CD8-positive, alpha-beta T cell (primary cell): ENCODE measurements at regions of chr19 and their contacts with region 1.

Region 1: DNA sequence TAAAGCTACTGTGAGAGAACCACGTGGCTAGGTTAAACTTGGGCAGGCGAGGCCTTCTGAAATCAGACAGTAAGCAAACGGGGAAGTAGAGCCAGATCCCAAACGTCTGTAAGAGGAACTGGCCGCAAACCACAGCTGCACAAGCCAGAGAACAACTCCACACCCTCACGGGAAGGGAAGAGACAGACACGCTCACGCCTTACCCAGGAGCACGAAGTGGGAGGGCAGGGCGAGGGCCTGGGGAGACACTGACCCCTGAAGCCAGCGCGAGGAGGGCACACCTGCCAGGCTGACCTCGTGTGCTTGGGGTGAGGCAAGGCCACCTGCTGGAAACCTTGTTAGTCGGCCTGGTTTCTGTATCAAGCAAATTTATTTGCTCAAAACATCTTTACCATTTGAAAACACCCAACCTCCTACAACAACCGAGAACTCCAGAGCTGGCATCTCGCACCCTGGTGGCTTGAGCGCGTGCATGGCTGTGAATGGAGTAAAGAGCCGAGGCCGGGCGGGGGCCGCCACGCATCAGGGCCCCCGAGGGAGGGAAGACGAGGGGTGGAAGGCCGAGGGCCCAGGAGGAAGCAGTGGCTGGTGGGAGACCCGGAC is 7.3 kb downstream of the POLR2E start:
- DNase-seq: peak in 5 of 9 experiments; percentile 61 to 82 (median 68)
- ATAC-seq: peak; percentile 21
- H3K4me3 ChIP-seq: no peak overlapping the region
- H3K4me3 Mint-ChIP-seq: peak overlapping the region; percentile 64
- H3K27ac ChIP-seq: peak overlapping the region; percentile 29 to 74
- H3K27ac Mint-ChIP-seq: peak overlapping the region; percentile 95
- H3K4me1 ChIP-seq: peaks cover 90% of the 10 kb centered on the region
- H3K4me1 Mint-ChIP-seq: peaks cover 44% of the 10 kb centered on the region
- H3K27me3 ChIP-seq: no peaks in the 10 kb centered on the region
- H3K27me3 Mint-ChIP-seq: no peaks in the 10 kb centered on the region
- CTCF ChIP-seq: no peak

Region 2: GRCh38 chr19:920051-920864 is 167.7 kb before region 1 on chr19:
- CTCF ChIA-PET with region 1: no interaction called
- POLR2A ChIA-PET with region 1: no interaction called
- intact Hi-C with region 1: loop called (anchors 2 to 10 kb)
- DNase-seq: peak in 8 of 9 experiments; percentile 58 to 84 (median 80)
- ATAC-seq: peak; percentile 48
- H3K4me3 ChIP-seq: peak overlapping the region; percentile 40 to 57
- H3K4me3 Mint-ChIP-seq: peak overlapping the region; percentile 82
- H3K27ac ChIP-seq: peak overlapping the region in 1 of 2 experiments; percentile 21
- H3K27ac Mint-ChIP-seq: peak overlapping the region; percentile 93
- H3K4me1 ChIP-seq: peaks cover 48% of the 10 kb centered on the region
- H3K4me1 Mint-ChIP-seq: peaks cover 25% of the 10 kb centered on the region
- H3K27me3 ChIP-seq: peaks cover 0 to 29% of the 10 kb centered on the region in 2 experiments
- H3K27me3 Mint-ChIP-seq: no peaks in the 10 kb centered on the region
- CTCF ChIP-seq: no peak

Region 3: DNA sequence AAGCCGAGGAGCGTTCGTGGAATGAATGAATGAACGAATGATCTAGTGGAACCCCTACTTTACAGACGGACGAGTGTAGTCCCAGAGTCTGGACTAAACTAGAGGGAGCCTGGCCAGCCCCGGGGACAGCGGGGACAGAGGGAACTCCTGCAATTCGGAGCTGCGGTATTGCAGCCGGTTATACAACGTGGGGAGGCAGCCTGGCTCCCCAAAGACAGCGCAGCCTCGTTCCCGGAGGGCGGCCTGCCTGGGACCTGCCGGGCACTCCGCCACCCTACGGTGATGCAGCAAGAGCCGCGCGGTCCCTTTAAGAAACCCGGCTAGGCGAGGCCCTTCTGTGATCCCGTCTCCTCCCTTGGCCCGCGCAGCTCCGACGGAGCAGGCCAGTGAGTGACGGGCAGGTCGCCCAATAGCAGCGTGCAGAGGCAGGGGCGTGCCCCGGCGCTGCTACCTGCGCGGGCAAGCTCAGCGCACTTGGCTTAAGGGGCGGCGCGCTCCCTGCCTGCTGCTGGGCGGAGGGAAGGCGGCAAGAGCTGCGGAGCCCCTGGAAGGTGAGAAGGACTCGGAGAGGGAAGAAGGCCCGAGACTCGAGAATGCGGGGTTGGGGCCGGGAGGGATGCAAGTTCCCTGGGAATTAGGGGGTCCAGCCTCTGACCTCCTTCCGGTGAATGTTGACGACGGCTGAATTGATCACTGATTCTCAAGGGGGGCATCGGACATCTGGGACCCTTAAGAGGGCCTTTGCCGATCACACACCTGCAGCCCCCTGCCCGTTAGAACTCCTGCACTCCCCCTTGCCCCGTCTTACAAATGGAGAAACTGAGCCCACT is 48.1 kb before region 1 on chr19 and contains the start of gene ABCA7:
- CTCF ChIA-PET with region 1: interaction called, 7 read pairs
- POLR2A ChIA-PET with region 1: interaction called, 117 read pairs
- intact Hi-C with region 1: loop called in 1 of 2 experiments (anchors 2 kb)
- DNase-seq: peak; percentile 98 to 100 (median 99)
- ATAC-seq: peak; percentile 90
- H3K4me3 ChIP-seq: peak within 1 kb of the TSS; percentile 71 to 96
- H3K4me3 Mint-ChIP-seq: peak within 1 kb of the TSS; percentile 99
- H3K27ac ChIP-seq: peak within 1 kb of the TSS; percentile 65 to 71
- H3K27ac Mint-ChIP-seq: peak within 1 kb of the TSS; percentile 96
- H3K4me1 ChIP-seq: peaks cover 43% of the 10 kb centered on the region
- H3K4me1 Mint-ChIP-seq: peaks cover 50% of the 10 kb centered on the region
- H3K27me3 ChIP-seq: no peaks in the 10 kb centered on the region
- H3K27me3 Mint-ChIP-seq: no peaks in the 10 kb centered on the region
- CTCF ChIP-seq: no peak
- total RNA-seq, gene ABCA7: 93.3 to 98.0 TPM

Region 4: DNA sequence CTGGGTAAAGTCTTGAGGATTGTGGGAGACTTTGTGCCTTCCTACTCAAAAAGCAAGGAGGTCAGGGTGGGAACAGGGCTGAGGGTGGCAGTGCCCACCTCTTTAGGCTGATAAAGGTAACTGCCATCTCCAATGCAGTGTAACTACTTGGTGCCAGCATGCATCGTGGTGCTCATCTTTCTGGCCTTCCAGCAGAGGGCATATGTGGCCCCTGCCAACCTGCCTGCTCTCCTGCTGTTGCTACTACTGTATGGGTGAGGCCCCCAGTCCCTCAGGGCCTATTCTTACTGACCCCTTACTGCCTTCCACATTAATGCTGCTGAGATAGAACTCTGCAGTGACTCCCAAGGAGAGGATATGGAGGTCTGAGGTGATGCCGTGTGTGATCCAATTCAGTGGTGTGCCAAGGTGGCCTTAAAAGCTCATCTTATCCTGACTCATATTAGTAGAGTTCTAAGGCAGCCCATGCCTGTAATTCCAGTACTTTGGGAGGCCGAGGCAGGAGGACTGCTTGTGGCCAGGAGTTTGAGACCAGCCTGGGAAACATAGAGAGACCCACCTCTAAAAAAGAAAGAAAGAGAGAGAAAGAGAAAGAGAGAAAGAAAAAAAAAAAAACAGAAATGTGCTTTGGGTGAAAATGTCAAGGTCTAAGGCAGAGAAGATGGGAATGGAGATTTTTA is 30.6 kb before region 1 on chr19:
- CTCF ChIA-PET with region 1: interaction called, 50 read pairs
- POLR2A ChIA-PET with region 1: interaction called, 25 read pairs
- intact Hi-C with region 1: loop called in 1 of 2 experiments (anchors 1 kb)
- DNase-seq: peak in 3 of 9 experiments; percentile 53 to 76 (median 68)
- ATAC-seq: peak; percentile 61
- H3K4me3 ChIP-seq: no peak overlapping the region
- H3K4me3 Mint-ChIP-seq: no peak overlapping the region
- H3K27ac ChIP-seq: peak overlapping the region in 1 of 2 experiments; percentile 43
- H3K27ac Mint-ChIP-seq: peak overlapping the region; percentile 71
- H3K4me1 ChIP-seq: peaks cover 23% of the 10 kb centered on the region
- H3K4me1 Mint-ChIP-seq: peaks cover 24% of the 10 kb centered on the region
- H3K27me3 ChIP-seq: no peaks in the 10 kb centered on the region
- H3K27me3 Mint-ChIP-seq: no peaks in the 10 kb centered on the region
- CTCF ChIP-seq: no peak

Region 5: GRCh38 chr19:1103708-1104310 is 15.9 kb after region 1 on chr19 and contains the start of gene GPX4:
- CTCF ChIA-PET with region 1: interaction called, 10 read pairs
- POLR2A ChIA-PET with region 1: interaction called, 58 read pairs
- intact Hi-C with region 1: loop called in 1 of 2 experiments (anchors 2 kb)
- DNase-seq: peak; percentile 96 to 100 (median 98)
- ATAC-seq: peak; percentile 88
- H3K4me3 ChIP-seq: peak within 1 kb of the TSS; percentile 73 to 93
- H3K4me3 Mint-ChIP-seq: peak within 1 kb of the TSS; percentile 76
- H3K27ac ChIP-seq: peak within 1 kb of the TSS; percentile 86
- H3K27ac Mint-ChIP-seq: peak within 1 kb of the TSS; percentile 92
- H3K4me1 ChIP-seq: peaks cover 46% of the 10 kb centered on the region
- H3K4me1 Mint-ChIP-seq: peaks cover 27% of the 10 kb centered on the region
- H3K27me3 ChIP-seq: no peaks in the 10 kb centered on the region
- H3K27me3 Mint-ChIP-seq: no peaks in the 10 kb centered on the region
- CTCF ChIP-seq: no peak
- total RNA-seq, gene GPX4: 172 to 174 TPM

Region 6: DNA sequence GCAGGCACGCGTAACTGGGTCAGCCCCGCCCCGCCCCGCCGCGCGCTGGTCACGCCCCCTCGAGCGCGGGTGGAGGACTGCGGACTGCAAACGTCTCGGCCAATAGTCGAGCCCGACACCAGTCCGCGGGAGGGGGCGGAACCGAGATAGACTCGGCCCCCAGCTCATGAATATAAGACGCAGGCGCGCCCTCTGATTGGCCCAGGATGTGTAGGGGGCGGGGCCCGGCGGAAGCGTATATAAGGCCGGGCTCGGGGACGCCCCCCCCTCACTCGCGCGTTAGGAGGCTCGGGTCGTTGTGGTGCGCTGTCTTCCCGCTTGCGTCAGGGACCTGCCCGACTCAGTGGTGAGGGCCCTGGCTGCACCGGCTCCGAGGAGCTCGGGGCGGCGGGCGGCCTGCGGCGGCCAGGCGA is 181.2 kb after region 1 on chr19 and contains the start of gene CIRBP:
- CTCF ChIA-PET with region 1: interaction called, 3 read pairs
- POLR2A ChIA-PET with region 1: interaction called, 11 read pairs
- intact Hi-C with region 1: no loop called
- DNase-seq: peak; percentile 99 to 100 (median 99)
- ATAC-seq: peak; percentile 80
- H3K4me3 ChIP-seq: peak within 1 kb of the TSS; percentile 65 to 84
- H3K4me3 Mint-ChIP-seq: peak within 1 kb of the TSS; percentile 85
- H3K27ac ChIP-seq: peak within 1 kb of the TSS; percentile 88 to 89
- H3K27ac Mint-ChIP-seq: peak within 1 kb of the TSS; percentile 95
- H3K4me1 ChIP-seq: peaks cover 73% of the 10 kb centered on the region
- H3K4me1 Mint-ChIP-seq: peaks cover 68% of the 10 kb centered on the region
- H3K27me3 ChIP-seq: no peaks in the 10 kb centered on the region
- H3K27me3 Mint-ChIP-seq: no peaks in the 10 kb centered on the region
- CTCF ChIP-seq: no peak
- total RNA-seq, gene CIRBP: 689 to 695 TPM